ENCODE measurements at regions of chr11 and their contacts with region 1.

Region 1: GRCh38 chr11:110818032-110818687 is 105.9 kb upstream of the ARHGAP20 start:
- DNase-seq: no peak
- H3K4me3 Mint-ChIP-seq: no peak overlapping the region
- H3K27ac Mint-ChIP-seq: no peak overlapping the region
- H3K4me1 Mint-ChIP-seq: peaks cover 8% of the 10 kb centered on the region
- H3K27me3 Mint-ChIP-seq: no peaks in the 10 kb centered on the region

Region 2: DNA sequence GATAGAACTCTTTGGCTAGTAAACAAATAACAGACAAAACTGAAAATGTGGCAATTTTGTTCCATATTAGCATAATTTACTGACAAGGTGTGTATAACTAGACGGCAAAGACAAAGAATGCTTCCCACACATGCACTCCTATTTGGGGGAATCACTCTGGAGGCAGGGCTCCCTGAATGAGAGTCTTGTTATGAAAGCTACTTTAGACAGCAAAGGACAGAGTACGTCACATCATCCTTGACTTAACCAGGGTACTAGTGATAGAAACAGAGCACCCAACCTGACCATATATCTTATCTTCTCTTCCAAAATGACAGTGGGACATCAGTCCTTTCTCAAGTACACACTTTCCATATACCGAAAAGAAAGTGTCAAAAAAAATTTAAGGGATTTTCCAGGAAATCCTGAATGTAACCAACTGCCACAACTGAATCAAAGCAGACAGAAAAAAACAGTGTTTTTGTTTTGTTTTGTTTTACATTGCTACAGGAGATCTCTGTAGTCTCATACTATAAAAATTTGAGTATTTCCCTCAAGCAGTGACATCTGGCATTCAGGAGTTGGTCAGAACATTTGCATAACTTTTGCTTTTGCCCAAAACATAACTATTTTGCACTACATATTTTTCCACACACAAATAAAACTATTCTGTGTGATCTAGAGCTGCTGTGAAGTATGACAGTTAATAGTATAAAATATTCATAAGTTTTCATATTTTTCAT is 204.8 kb before region 1 on chr11:
- intact Hi-C with region 1: no loop called
- DNase-seq: no peak
- H3K4me3 Mint-ChIP-seq: no peak overlapping the region
- H3K27ac Mint-ChIP-seq: no peak overlapping the region
- H3K4me1 Mint-ChIP-seq: no peaks in the 10 kb centered on the region
- H3K27me3 Mint-ChIP-seq: peaks cover 3% of the 10 kb centered on the region

Region 3: DNA sequence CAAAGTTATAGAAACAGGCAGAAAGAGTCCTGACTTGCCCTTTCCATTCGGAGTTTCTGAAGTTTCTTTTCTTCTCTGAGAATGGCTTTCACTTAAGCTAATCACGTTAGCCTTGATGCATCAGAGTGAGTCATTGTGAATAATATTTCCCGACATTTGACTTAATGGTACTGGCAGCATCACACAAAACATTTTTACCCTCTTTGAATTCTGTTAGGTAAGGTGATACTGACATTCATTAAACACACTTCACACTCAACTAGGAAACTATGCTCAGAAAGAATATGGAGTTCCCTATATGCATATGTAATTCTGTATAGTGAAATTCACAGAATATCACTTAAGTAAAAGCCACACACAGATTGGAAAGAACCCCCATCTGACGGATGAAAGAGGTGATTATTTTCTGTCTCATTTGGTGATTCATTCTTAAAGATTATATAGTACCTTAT is 14.9 kb after region 1 on chr11:
- intact Hi-C with region 1: loop called (anchors 1 kb)
- DNase-seq: no peak
- H3K4me3 Mint-ChIP-seq: no peak overlapping the region
- H3K27ac Mint-ChIP-seq: peak overlapping the region; percentile 19
- H3K4me1 Mint-ChIP-seq: peaks cover 14% of the 10 kb centered on the region
- H3K27me3 Mint-ChIP-seq: no peaks in the 10 kb centered on the region

Region 4: DNA sequence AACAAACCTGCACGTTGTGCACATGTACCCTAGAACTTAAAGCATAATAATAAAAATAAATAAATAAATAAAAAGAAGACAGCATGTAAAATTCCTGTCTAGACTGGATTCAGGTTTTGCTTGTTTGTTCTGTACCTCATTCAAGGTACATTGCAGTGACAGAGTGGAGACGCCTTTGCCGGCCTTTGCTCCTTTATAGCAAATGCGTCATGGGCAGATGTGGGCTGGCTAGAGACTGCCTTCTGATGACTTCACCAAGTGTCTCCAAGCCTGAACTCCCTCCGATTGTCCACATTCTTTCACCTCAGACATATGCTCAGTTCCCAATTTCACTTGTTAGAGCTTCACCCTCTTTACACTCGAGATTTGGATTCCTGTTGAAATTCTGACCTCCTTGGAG is 41.8 kb after region 1 on chr11:
- intact Hi-C with region 1: loop called (anchors 2 kb)
- DNase-seq: no peak
- H3K4me3 Mint-ChIP-seq: no peak overlapping the region
- H3K27ac Mint-ChIP-seq: no peak overlapping the region
- H3K4me1 Mint-ChIP-seq: no peaks in the 10 kb centered on the region
- H3K27me3 Mint-ChIP-seq: no peaks in the 10 kb centered on the region

Region 5: DNA sequence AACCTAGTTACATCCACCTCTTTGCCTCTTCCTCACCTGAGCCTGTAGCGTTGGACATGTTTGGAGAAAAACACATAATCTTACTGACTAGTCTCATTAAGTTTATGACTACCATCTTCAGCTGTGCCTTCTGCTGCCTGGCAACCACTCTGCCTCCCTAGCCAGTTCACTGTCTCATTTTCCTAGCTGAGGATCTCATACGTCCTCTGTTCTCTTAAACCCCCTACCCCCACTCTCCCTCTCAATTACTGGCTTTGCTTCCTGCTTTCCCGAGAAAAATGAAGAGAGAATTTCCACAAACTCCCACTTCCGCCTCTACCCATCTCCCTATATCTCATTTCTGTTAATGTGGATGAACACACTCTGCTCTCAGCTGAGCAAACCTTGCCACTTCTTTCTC is 188.1 kb after region 1 on chr11:
- intact Hi-C with region 1: no loop called
- DNase-seq: no peak
- H3K4me3 Mint-ChIP-seq: no peak overlapping the region
- H3K27ac Mint-ChIP-seq: no peak overlapping the region
- H3K4me1 Mint-ChIP-seq: no peaks in the 10 kb centered on the region
- H3K27me3 Mint-ChIP-seq: peaks cover 2% of the 10 kb centered on the region

Measured in activated CD4-positive, alpha-beta T cell treated with anti-CD3 and anti-CD28 coated beads, Interleukin-2, amount 10 ng/mL, durations not matched to agents 24 days and 14 days (primary cell).